Calu3 (cell line): ENCODE measurements at regions of chr12 and their contacts with region 1.

Region 1: GRCh38 chr12:72017054-72017651 is 78.5 kb downstream of the TPH2 start:
- DNase-seq: peak; percentile 84
- H3K4me3 Mint-ChIP-seq: no peak overlapping the region
- H3K27ac Mint-ChIP-seq: no peak overlapping the region
- H3K4me1 Mint-ChIP-seq: peaks cover 2% of the 10 kb centered on the region
- H3K27me3 Mint-ChIP-seq: no peaks in the 10 kb centered on the region
- CTCF ChIP-seq: peak; percentile 78

Region 2: DNA sequence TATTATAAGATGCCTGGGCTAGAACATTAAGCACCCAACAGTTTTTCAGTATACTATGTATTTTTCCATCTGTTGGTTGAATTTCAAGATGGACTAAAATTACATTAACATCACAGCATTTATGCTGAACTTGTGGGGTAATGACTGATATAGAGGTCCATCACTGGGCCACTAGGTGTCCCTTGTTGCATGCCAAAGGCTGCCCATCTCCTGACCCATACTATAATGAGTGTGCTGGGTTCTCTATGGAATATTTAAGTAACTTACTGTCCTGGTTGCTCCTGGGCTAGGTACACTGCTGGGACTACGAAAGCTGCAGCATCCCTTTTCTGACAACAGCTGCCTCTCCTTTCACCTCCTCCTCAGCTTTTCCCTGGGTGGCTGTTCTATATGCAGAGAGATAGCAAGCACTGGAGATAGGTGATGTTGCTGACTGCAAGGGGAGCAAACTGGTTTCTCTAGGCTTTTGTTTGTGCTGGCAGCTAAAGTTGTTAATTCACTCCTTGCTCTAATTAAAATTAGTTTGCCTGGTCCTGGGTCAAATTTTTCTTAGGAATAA is 116.4 kb after region 1 on chr12:
- CTCF ChIA-PET with region 1: interaction called, 3 read pairs
- intact Hi-C with region 1: loop called (anchors 5 kb)
- DNase-seq: no peak
- H3K4me3 Mint-ChIP-seq: no peak overlapping the region
- H3K27ac Mint-ChIP-seq: no peak overlapping the region
- H3K4me1 Mint-ChIP-seq: peaks cover 8% of the 10 kb centered on the region
- H3K27me3 Mint-ChIP-seq: peaks cover 12% of the 10 kb centered on the region
- CTCF ChIP-seq: no peak

Region 3: DNA sequence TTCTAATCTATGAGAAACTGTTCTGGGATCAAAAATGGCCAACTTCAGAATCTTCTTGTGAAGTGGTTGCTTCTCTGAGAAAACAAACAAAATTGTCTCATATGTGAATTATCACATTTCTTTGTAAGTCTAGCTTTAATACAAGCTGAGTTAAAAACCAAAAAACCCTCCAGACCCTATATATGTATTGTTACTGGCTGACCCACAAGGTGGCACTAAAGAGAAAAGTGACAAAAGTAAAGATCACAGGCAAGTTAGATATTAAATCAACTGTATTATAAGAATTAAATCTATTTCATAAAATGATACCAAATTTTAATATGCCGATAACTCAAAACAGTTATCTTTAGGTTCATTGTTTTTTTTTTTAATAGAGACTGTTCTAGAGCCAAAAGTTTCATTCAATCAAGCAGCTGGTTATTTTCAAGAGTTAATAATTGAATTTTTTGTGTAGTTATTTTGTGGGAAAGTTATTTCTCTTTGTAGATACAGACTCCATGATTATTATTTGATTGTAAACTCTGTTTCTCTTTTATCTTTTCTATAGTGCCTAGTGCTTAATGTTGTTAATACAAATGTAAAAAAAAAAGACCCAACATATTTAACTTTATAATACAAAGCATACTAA is 247.5 kb after region 1 on chr12:
- CTCF ChIA-PET with region 1: interaction called, 7 read pairs
- intact Hi-C with region 1: loop called (anchors 1 kb)
- DNase-seq: no peak
- H3K4me3 Mint-ChIP-seq: no peak overlapping the region
- H3K27ac Mint-ChIP-seq: no peak overlapping the region
- H3K4me1 Mint-ChIP-seq: peaks cover 16% of the 10 kb centered on the region
- H3K27me3 Mint-ChIP-seq: no peaks in the 10 kb centered on the region
- CTCF ChIP-seq: peak; percentile 38

Region 4: GRCh38 chr12:72282721-72283120 is 265.6 kb after region 1 on chr12:
- CTCF ChIA-PET with region 1: no interaction called
- intact Hi-C with region 1: loop called (anchors 1 kb)
- DNase-seq: no peak
- H3K4me3 Mint-ChIP-seq: peak overlapping the region; percentile 36
- H3K27ac Mint-ChIP-seq: peak overlapping the region; percentile 73
- H3K4me1 Mint-ChIP-seq: peaks cover 66% of the 10 kb centered on the region
- H3K27me3 Mint-ChIP-seq: no peaks in the 10 kb centered on the region
- CTCF ChIP-seq: peak; percentile 18